ENCODE measurements at regions of chr7 and their contacts with region 1.

Region 1: GRCh38 chr7:100673300-100673941 is at the start of gene GNB2:
- DNase-seq: peak; percentile 99
- H3K4me3 ChIP-seq: peak within 1 kb of the TSS; percentile 70 to 88 (median 86)
- H3K27ac ChIP-seq: peak within 1 kb of the TSS; percentile 89
- H3K4me1 ChIP-seq: peaks cover 4% of the 10 kb centered on the region
- H3K27me3 ChIP-seq: peaks cover 2 to 5% of the 10 kb centered on the region in 2 experiments
- CTCF ChIP-seq: no peak
- POLR2A ChIP-seq: peak; percentile 51
- total RNA-seq, gene GNB2: 297 and 300 TPM in 2 replicates

Region 2: DNA sequence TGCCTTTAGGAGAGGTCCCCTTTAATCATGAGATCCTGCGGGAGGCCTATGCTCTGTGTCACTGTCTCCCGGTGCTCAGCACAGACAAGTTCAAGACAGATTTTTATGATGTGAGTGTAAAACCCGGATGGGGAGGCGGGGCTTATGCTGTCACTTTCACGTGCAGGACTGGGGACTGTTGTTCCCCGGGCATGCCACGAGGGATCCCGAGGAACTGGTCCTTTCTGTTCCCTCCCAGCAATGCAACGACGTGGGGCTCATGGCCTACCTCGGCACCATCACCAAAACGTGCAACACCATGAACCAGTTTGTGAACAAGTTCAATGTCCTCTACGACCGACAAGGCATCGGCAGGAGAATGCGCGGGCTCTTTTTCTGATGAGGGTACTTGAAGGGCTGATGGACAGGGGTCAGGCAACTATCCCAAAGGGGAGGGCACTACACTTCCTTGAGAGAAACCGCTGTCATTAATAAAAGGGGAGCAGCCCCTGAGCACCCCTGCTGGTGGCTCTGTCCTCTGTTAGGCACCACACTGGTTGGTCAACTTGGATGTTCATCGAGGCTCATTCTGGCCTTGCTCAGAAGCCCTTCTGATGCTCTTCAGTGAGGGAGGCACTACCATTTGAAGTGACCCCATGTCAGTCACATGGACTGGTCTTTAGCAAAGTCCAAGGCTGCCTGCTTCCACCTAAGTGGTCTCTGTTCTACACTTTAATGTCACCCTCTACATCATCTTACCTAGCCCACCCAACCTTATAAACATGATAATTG is 581.8 kb before region 1 on chr7:
- CTCF ChIA-PET with region 1: no interaction called
- POLR2A ChIA-PET with region 1: no interaction called
- dilution Hi-C with region 1: no loop called
- intact Hi-C with region 1: no loop called
- DNase-seq: no peak
- H3K4me3 ChIP-seq: no peak overlapping the region
- H3K27ac ChIP-seq: no peak overlapping the region
- H3K4me1 ChIP-seq: peaks cover 33% of the 10 kb centered on the region
- H3K27me3 ChIP-seq: no peaks in the 10 kb centered on the region
- CTCF ChIP-seq: peak in 1 of 2 donors; percentile 2
- POLR2A ChIP-seq: peak; percentile 15

Region 3: GRCh38 chr7:100469227-100470044 is 204.0 kb before region 1 on chr7:
- CTCF ChIA-PET with region 1: interaction called, 4 read pairs
- POLR2A ChIA-PET with region 1: no interaction called
- dilution Hi-C with region 1: no loop called
- intact Hi-C with region 1: loop called (anchors 5 kb)
- DNase-seq: peak; percentile 66
- H3K4me3 ChIP-seq: no peak overlapping the region
- H3K27ac ChIP-seq: no peak overlapping the region
- H3K4me1 ChIP-seq: peaks cover 8% of the 10 kb centered on the region
- H3K27me3 ChIP-seq: no peaks in the 10 kb centered on the region
- CTCF ChIP-seq: peak; percentile 89 to 100
- POLR2A ChIP-seq: peak; percentile 52

Region 4: DNA sequence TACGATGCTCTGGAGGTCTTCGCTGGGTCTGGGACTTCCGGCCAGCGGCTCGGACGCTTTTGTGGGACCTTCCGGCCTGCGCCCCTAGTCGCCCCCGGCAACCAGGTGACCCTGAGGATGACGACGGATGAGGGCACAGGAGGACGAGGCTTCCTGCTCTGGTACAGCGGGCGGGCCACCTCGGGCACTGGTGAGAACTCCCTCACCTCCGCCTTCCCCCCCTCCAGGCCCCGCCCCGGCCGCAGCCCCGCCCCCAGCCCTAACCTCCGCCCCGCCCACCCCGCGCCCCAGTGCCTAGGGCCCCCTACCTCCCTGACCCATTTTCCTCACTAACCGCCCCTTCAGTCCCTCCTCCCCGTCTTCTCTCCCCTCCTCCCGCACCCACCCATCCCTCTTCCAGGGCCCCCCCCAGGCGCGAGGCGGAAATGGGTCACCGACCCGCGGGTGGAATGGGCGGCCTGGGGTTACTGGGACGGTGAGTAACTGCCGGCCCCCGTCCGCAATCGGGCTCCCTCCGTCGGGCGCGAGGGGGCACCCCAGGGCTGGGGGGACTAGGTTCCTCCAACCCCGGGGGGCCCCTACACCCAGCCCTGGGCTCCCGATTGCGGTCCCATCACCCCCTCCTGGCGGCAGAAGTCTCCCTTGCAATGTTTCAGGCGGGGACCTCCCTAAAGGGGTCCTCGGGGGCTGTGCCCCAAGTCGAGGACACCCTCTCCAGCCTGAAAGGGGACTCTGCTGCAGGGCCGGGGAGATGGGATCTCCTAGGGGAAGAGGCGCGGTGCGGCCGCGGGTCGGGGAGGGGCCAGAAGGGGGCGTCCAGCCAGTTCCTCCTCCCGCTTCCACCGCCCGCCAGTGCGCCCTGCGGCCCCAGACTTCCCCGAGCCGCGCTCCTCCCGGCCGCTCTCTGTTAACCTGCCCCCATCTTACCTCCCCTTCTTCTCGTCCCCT is 69.1 kb before region 1 on chr7:
- CTCF ChIA-PET with region 1: no interaction called
- POLR2A ChIA-PET with region 1: no interaction called
- dilution Hi-C with region 1: no loop called
- intact Hi-C with region 1: loop called (anchors 1 kb)
- DNase-seq: peak; percentile 43
- H3K4me3 ChIP-seq: peak overlapping the region; percentile 44 to 65 (median 54)
- H3K27ac ChIP-seq: no peak overlapping the region
- H3K4me1 ChIP-seq: peaks cover 25% of the 10 kb centered on the region
- H3K27me3 ChIP-seq: no peaks in the 10 kb centered on the region
- CTCF ChIP-seq: peak; percentile 43 to 55
- POLR2A ChIP-seq: no peak

Region 5: DNA sequence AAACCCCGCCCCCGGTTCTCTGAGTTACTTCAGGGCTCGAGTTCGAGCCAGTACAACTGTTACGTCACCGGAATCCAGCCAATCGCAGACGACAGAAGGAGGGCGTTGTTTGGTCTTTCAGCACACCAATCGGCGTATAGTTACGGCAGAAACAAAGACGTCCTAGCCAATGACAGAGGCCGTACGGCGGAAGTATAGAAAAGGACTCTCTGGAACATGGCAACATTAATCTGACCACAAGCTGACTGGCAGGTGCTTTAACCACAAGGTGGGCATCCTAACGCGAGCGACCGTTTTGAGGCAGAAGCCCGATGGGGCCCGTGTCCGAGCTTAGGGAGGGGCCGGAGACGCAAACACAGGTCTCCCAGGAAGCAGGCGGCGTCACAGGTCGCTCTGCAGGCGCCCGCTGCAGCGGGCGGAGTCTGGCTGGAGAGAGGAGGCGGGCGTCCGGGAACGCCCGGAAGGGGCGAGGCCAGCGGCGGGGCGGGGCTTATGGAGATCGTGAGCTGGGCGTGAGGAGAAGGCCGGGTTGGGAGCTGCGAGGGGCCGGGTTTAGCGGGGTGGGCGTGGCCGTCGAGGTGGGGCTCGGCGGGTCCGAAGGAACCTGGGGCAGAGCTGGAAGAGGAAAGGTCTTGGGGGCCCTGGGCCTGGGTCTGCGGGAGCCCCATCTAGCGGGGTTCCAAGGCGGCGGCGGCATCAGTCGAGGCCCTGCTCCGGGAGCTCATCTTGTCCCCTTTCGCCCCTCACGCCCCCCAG is 61.3 kb before region 1 on chr7 and contains the start of gene MOSPD3:
- CTCF ChIA-PET with region 1: interaction called, 7 read pairs
- POLR2A ChIA-PET with region 1: no interaction called
- dilution Hi-C with region 1: no loop called
- intact Hi-C with region 1: loop called (anchors 1 kb)
- DNase-seq: peak; percentile 100
- H3K4me3 ChIP-seq: peak within 1 kb of the TSS; percentile 18 to 57 (median 56)
- H3K27ac ChIP-seq: peak within 1 kb of the TSS; percentile 46
- H3K4me1 ChIP-seq: peaks cover 10% of the 10 kb centered on the region
- H3K27me3 ChIP-seq: no peaks in the 10 kb centered on the region
- CTCF ChIP-seq: no peak
- POLR2A ChIP-seq: peak; percentile 69
- total RNA-seq, gene MOSPD3: 24.2 and 24.4 TPM in 2 replicates

Region 6: DNA sequence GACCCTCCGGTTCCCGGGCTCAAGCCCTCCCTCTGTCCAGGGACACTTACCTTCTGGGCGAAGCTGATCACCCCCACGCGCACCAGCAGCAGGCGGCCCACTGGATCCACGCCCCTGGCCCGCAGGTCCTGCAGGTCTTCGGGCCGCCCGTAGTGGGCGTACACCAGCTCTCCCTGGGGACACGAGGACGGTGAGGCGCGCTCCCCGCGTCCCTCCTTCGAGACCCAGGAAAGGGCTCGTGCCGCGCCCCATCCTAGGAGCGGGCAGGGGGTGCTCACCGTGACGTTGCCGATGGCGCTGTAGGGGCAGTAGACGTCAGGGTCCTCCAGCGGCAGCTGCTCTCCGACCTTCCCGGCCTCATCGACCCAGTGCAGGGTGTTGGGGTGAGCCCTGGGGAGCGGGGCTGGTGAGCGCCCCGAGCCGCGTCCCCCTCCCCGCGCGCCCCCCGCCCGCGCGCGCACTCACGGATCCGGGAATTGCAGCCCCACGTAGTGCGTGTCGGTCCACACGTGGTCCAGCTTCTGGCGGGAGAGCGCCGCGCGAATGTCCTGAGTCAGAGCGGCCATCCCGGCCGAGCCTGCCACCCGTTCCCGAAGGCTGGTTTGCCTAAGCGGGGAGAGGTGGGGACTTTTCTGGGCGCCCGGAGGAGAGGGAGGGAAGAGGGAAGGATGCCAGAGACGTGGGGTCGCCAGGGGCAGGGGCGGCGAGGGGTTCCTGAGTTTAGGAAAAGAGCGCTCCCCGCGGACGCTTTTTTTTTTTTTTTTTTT is 40.3 kb before region 1 on chr7:
- CTCF ChIA-PET with region 1: interaction called, 7 read pairs
- POLR2A ChIA-PET with region 1: interaction called, 4 read pairs
- dilution Hi-C with region 1: no loop called
- intact Hi-C with region 1: loop called (anchors 1 kb)
- DNase-seq: no peak
- H3K4me3 ChIP-seq: peak overlapping the region; percentile 16 to 34 (median 27)
- H3K27ac ChIP-seq: no peak overlapping the region
- H3K4me1 ChIP-seq: peaks cover 5% of the 10 kb centered on the region
- H3K27me3 ChIP-seq: peaks cover 2 to 7% of the 10 kb centered on the region in 2 experiments
- CTCF ChIP-seq: peak; percentile 35 to 56
- POLR2A ChIP-seq: no peak

Region 7: GRCh38 chr7:100655908-100656674 is 17.3 kb before region 1 on chr7 and contains the start of gene ACTL6B:
- CTCF ChIA-PET with region 1: interaction called, 4 read pairs
- POLR2A ChIA-PET with region 1: no interaction called
- dilution Hi-C with region 1: no loop called
- intact Hi-C with region 1: loop called (anchors 1 kb)
- DNase-seq: peak; percentile 56
- H3K4me3 ChIP-seq: no peak within 1 kb of the TSS
- H3K27ac ChIP-seq: no peak within 1 kb of the TSS
- H3K4me1 ChIP-seq: no peaks in the 10 kb centered on the region
- H3K27me3 ChIP-seq: peaks cover 2 to 4% of the 10 kb centered on the region in 2 experiments
- CTCF ChIP-seq: no peak
- POLR2A ChIP-seq: no peak
- total RNA-seq, gene ACTL6B: not detected in 2 replicates

Region 8: GRCh38 chr7:100691676-100692577 is 18.5 kb after region 1 on chr7:
- CTCF ChIA-PET with region 1: interaction called, 60 read pairs
- POLR2A ChIA-PET with region 1: no interaction called
- dilution Hi-C with region 1: no loop called
- intact Hi-C with region 1: loop called (anchors 1 kb)
- DNase-seq: peak; percentile 65
- H3K4me3 ChIP-seq: peak overlapping the region in 1 of 3 experiments; percentile 65
- H3K27ac ChIP-seq: no peak overlapping the region
- H3K4me1 ChIP-seq: peaks cover 16% of the 10 kb centered on the region
- H3K27me3 ChIP-seq: no peaks in the 10 kb centered on the region
- CTCF ChIP-seq: peak; percentile 86 to 89
- POLR2A ChIP-seq: no peak

Measured in endothelial cell of umbilical vein (primary cell).